KBM-7 (cell line): ENCODE measurements at regions of chr10 and their contacts with region 1.

Region 1: DNA sequence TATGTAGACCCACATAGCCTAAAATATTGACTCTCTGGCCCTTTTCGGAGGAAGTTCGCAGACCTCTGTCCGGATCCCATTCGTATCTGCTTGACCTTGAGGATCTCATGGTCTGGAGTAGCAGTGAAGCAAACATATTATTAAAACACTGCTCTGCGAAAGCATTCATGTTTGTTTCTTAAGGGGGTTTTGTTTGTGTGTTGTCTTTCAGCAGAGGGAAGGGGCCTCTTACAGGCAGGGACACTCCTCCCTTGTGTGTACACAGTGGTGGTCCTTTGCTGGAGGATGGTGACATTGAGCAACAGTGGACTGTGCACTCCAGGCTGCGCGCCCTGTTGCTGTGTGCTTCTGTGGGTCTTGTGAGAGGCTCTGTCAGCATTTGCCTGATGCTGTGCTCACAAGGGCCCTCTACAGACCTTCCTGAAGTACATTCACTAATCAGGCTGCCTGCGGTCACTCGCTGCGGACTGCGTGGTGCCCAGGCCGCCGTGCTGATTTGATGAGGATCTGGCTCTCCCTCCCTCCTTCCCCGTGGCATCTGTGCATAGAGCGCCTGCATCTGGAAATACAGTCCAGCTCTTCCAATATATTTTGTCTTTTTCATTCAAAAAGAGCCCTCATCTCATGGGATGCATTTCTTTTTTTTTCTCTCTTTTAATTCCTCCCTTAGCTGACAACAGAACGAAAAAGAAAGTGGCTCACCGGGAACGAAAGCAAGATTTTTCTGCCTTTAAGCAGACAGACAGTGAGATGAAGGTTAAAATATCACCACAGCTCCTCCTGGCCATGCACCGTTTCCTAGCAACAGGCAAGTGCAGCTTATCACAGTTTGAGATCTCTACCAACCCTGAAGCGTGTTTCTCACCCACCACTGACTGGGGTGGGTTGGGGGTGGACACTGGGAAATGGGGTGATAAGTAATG is 135.8 kb downstream of the CNNM2 start:
- DNase-seq: peak; percentile 33

Region 2: GRCh38 chr10:102927311-102928010 is 126.5 kb before region 1 on chr10:
- in situ Hi-C with region 1: loop called (anchors 10 kb)
- DNase-seq: peak; percentile 94